Endothelial cell of umbilical vein (primary cell): ENCODE measurements at regions of chr2 and their contacts with region 1.

Region 1: GRCh38 chr2:140863713-140864112 is 1267.1 kb downstream of the LRP1B start:
- DNase-seq: peak; percentile 63
- H3K4me3 ChIP-seq: no peak overlapping the region
- H3K27ac ChIP-seq: no peak overlapping the region
- H3K4me1 ChIP-seq: no peaks in the 10 kb centered on the region
- H3K27me3 ChIP-seq: no peaks in the 10 kb centered on the region
- CTCF ChIP-seq: peak; percentile 24 to 41
- POLR2A ChIP-seq: no peak

Region 2: DNA sequence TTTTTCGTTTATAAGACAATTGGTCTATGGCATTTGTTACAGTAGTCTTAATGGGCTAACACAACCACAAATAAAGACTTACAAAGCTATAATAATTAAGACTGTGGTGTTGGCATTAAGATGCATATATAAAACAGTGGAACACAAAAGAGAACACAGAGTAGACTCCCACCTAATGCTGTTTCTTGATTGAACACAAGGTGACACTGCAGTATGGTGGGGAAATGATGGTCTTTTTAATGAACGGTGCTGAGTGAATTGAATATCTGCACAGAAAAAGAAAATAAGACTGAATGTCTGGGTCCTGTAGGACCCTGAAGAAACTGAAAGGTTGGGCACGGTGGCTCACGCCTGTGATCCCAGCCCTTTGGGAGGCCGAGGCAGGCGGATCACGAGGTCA is 946.9 kb before region 1 on chr2:
- CTCF ChIA-PET with region 1: interaction called, 23 read pairs
- POLR2A ChIA-PET with region 1: no interaction called
- dilution Hi-C with region 1: no loop called
- intact Hi-C with region 1: loop called (anchors 1 kb)
- DNase-seq: peak; percentile 11
- H3K4me3 ChIP-seq: no peak overlapping the region
- H3K27ac ChIP-seq: no peak overlapping the region
- H3K4me1 ChIP-seq: no peaks in the 10 kb centered on the region
- H3K27me3 ChIP-seq: no peaks in the 10 kb centered on the region
- CTCF ChIP-seq: peak; percentile 19 to 42
- POLR2A ChIP-seq: no peak

Region 3: DNA sequence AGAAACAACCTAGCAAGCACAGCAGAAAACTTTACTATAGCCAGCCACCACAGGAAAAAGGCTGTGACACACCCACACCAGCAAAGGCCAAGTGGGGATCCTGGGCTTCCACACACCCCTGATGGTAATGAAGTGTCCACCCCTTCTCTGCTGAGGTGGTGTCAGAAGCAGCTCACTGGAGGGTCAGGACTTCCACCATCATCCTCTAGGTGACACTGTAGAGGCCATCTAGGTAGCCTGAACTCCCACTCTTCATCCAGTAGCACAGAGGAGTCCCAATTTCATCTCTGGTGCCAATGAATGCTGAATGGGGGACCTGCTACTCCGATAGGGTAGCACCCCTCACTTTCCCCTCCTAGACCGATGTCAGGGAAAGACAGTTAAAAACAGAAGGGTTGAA is 277.3 kb before region 1 on chr2:
- CTCF ChIA-PET with region 1: interaction called, 28 read pairs
- POLR2A ChIA-PET with region 1: no interaction called
- dilution Hi-C with region 1: no loop called
- intact Hi-C with region 1: loop called (anchors 1 kb)
- DNase-seq: peak; percentile 42
- H3K4me3 ChIP-seq: no peak overlapping the region
- H3K27ac ChIP-seq: no peak overlapping the region
- H3K4me1 ChIP-seq: no peaks in the 10 kb centered on the region
- H3K27me3 ChIP-seq: no peaks in the 10 kb centered on the region
- CTCF ChIP-seq: peak; percentile 49 to 67
- POLR2A ChIP-seq: no peak

Region 4: GRCh38 chr2:140873915-140874531 is 10.3 kb after region 1 on chr2:
- CTCF ChIA-PET with region 1: interaction called, 14 read pairs
- POLR2A ChIA-PET with region 1: no interaction called
- dilution Hi-C with region 1: no loop called
- intact Hi-C with region 1: no loop called
- DNase-seq: no peak
- H3K4me3 ChIP-seq: no peak overlapping the region
- H3K27ac ChIP-seq: no peak overlapping the region
- H3K4me1 ChIP-seq: no peaks in the 10 kb centered on the region
- H3K27me3 ChIP-seq: no peaks in the 10 kb centered on the region
- CTCF ChIP-seq: no peak
- POLR2A ChIP-seq: no peak

Region 5: GRCh38 chr2:141554810-141555209 is 691.1 kb after region 1 on chr2:
- CTCF ChIA-PET with region 1: interaction called, 26 read pairs
- POLR2A ChIA-PET with region 1: no interaction called
- dilution Hi-C with region 1: no loop called
- intact Hi-C with region 1: no loop called
- DNase-seq: peak; percentile 38
- H3K4me3 ChIP-seq: no peak overlapping the region
- H3K27ac ChIP-seq: no peak overlapping the region
- H3K4me1 ChIP-seq: no peaks in the 10 kb centered on the region
- H3K27me3 ChIP-seq: no peaks in the 10 kb centered on the region
- CTCF ChIP-seq: peak; percentile 29 to 33
- POLR2A ChIP-seq: no peak